Calu3 (cell line): ENCODE measurements at regions of chr10 and their contacts with region 1.

Region 1: GRCh38 chr10:91298224-91298871 is 77.9 kb downstream of the PCGF5 start:
- DNase-seq: peak; percentile 71
- H3K4me3 Mint-ChIP-seq: peak overlapping the region; percentile 44
- H3K27ac Mint-ChIP-seq: no peak overlapping the region
- H3K4me1 Mint-ChIP-seq: peaks cover 8% of the 10 kb centered on the region
- H3K27me3 Mint-ChIP-seq: no peaks in the 10 kb centered on the region
- CTCF ChIP-seq: peak; percentile 64

Region 2: GRCh38 chr10:91198781-91199180 is 99.6 kb before region 1 on chr10:
- CTCF ChIA-PET with region 1: no interaction called
- intact Hi-C with region 1: no loop called
- DNase-seq: no peak
- H3K4me3 Mint-ChIP-seq: no peak overlapping the region
- H3K27ac Mint-ChIP-seq: peak overlapping the region; percentile 26
- H3K4me1 Mint-ChIP-seq: peaks cover 13% of the 10 kb centered on the region
- H3K27me3 Mint-ChIP-seq: no peaks in the 10 kb centered on the region
- CTCF ChIP-seq: no peak

Region 3: DNA sequence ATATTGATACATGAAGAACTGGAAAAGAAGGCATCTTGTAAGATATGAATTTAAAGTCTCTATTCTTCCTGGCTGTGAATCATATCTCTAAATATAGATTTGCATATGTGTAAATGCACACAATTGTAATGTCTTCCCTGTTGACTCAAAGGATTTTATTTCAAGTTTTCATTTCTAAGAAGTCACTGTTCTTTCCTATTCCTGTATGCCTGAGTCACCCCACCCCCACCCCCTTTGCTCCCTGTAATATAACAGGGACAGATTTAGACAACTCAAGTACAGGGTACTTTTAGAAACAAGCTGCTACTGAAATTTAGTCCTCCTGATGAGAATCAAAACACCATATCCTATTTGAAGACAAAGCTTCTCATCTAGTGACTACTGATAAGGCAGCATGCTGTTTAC is 68.8 kb after region 1 on chr10:
- CTCF ChIA-PET with region 1: interaction called, 11 read pairs
- intact Hi-C with region 1: loop called (anchors 5 kb)
- DNase-seq: no peak
- H3K4me3 Mint-ChIP-seq: no peak overlapping the region
- H3K27ac Mint-ChIP-seq: no peak overlapping the region
- H3K4me1 Mint-ChIP-seq: no peaks in the 10 kb centered on the region
- H3K27me3 Mint-ChIP-seq: peaks cover 37% of the 10 kb centered on the region
- CTCF ChIP-seq: no peak